Heart right ventricle (tissue), 16 donors: ENCODE measurements at regions of chr4 and their contacts with region 1.

Region 1: DNA sequence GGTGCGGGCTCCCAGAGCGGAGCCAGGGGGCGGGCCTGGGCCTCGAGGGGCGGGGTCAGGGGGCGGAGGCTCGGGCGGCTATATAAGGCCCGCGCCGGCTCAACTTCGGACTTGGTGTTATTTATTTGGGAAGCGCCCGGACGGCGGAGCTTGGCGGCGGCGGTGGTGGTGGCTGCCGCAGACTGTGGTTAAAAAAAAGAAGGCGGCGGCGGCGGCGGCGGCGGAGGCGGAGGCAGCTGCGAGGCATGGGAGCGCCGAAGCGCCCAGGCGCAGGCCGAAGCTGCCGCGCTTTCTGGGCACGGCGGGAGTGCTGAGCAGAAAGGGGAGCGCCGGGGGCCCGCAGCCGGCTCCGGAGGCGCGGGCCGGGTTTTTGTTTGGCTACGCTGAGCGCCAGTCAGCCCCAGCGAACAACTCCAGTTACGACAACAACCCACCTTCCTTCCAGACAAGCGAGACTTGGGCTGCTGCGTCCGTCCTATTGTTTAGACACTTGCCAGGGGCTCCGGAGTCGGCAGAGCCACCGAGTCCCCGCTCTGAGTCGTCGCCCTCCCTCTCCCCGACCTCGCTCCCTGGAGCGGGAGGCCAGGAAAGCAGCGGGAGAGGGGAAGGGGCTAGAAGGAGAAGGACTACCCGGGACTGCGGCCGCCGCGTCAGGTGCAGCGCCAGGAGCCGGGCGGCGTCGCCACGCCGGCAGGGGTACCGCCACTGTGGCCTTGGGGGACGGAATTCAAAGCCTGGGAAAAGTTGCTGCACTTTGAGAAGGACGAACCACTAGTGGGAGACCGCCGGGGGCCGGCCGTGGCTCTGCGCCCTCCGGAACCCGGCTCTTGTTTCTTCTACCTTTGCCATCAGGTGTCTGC is at the start of gene SLIT2:
- DNase-seq: peak; percentile 75 to 79
- ATAC-seq: peak; percentile 86 to 93 (median 88)
- H3K4me3 ChIP-seq: peak within 1 kb of the TSS; percentile 39 to 71 (median 64)
- H3K27ac ChIP-seq: peak within 1 kb of the TSS in 8 of 10 donors; percentile 33 to 64 (median 54)
- H3K4me1 ChIP-seq: peaks cover 3 to 38% (median 20%) of the 10 kb centered on the region in 9 donors
- H3K27me3 ChIP-seq: peaks cover 0 to 66% (median 46%) of the 10 kb centered on the region in 7 donors
- CTCF ChIP-seq: peak in 4 of 9 donors; percentile 8 to 44 (median 34)
- total RNA-seq, gene SLIT2: 4.2 to 11.9 (median 5.9) TPM

Region 2: DNA sequence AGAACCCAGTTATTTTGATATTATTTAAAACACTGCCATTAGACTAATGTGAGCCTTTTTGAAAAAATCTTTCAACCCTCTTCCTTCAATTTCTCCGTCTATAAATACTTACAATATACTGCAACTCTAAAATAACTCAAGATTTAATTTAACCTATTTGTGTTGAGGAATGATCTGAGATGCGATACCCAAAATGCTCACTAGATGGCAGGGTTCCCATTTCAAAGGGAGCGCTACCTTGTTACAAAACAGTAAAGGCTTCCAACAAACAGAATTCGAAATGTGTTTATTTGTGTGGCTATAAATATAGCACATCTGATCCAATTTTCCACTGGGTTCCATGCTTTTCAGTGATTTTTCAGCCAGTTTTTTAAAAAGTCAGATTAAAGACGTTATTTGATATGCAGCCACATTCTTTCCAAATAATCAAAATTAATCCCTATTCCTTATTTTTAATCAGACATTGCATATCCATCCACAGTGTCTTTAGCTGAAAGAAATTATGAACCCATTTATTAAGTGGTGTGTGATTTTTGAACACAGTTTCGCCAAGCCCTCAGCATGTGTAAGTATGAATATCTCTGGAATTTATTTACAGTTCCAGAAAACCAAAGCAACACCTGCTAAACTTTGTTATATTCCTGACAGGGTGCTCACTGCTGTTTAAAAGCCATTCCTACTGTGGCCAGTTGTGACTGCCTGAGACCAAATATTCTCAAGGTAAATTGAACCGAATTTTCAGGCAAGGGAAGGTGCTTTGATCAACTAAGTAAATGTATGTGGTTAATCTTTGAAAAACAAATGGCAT is 1562.5 kb before region 1 on chr4:
- intact Hi-C with region 1: loop called in 2 of 10 experiments (anchors 10 kb)
- DNase-seq: peak in 1 of 2 donors; percentile 41
- ATAC-seq: peak in 5 of 8 donors; percentile 46 to 67 (median 63)
- H3K4me3 ChIP-seq: no peak overlapping the region
- H3K27ac ChIP-seq: no peak overlapping the region
- H3K4me1 ChIP-seq: peaks cover 0 to 9% (median 0%) of the 10 kb centered on the region in 9 donors
- H3K27me3 ChIP-seq: no peaks in the 10 kb centered on the region
- CTCF ChIP-seq: peak; percentile 74 to 91 (median 86)

Region 3: GRCh38 chr4:19224820-19225219 is 1027.2 kb before region 1 on chr4:
- intact Hi-C with region 1: loop called in 7 of 10 experiments (anchors 5 to 10 kb)
- DNase-seq: no peak
- ATAC-seq: no peak
- H3K4me3 ChIP-seq: no peak overlapping the region
- H3K27ac ChIP-seq: no peak overlapping the region
- H3K4me1 ChIP-seq: no peaks in the 10 kb centered on the region
- H3K27me3 ChIP-seq: no peaks in the 10 kb centered on the region
- CTCF ChIP-seq: peak in 8 of 9 donors; percentile 19 to 62 (median 46)